Mammary epithelial cell (primary cell): ENCODE measurements at regions of chr2 and their contacts with region 1.

Region 1: DNA sequence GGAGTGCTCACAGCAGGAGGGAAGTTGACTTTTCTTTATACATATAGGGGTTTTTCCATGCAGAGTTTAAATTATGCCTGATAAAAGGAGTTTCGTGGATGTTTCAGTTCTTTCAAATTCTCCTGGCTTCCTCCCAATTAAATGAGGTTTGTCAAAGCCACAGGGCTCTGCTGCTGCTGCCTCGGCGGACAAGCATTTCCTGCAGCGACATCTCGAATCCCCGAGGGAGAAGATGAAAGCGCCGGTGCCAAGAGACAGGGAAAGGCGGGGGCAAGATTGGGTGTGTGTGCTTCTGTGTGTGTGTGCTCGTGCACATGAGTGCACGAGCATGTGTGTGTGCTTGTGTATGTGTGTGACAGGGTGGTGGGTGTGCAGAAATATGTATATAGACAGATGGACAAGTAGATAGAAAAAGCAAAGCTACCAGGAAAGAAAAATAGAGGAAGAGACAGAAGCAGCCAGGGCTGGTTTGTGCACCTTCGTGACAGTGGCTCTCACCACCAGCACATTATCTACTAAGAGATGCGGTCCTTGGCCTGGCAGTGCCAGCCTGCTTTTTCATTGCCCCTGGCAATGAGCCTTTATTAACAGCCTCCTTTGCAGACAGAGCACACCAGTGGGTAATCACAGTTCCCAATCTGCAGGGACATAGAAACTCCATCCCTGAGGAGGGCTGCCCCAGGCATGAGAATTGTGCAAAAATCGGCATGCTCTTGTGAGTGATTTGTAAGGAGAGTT is 76.2 kb downstream of the CDK15 start:
- DNase-seq: peak; percentile 27
- H3K4me3 ChIP-seq: no peak overlapping the region
- H3K27ac ChIP-seq: no peak overlapping the region
- H3K4me1 ChIP-seq: peaks cover 11% of the 10 kb centered on the region
- H3K27me3 ChIP-seq: no peaks in the 10 kb centered on the region
- CTCF ChIP-seq: no peak

Region 2: DNA sequence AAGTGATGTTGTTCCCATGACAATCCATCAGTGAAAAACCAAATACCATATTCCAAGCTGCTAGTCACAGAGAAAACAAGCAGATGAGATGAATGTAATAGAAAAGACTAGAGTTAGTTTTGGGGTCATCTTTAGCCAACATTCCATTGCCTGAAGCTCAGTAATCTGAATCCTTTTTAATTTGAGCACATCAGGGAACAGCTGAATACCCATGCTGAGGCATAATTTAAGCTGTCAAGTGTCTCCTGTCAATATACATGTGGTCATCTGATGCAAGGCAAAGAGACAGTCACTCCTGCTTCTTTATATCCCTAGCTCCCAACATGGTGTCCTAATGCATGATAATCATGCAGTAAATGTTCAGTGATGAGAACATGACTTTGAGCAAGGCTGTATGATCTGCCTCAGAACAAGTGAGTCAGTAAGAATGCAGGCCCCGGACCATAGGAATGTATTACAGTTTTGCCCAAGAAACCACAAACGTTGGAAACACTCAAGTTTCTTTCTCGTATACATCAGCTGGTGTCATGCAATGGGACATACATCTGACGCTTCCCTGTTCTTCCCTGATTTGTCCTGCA is 28.2 kb before region 1 on chr2:
- CTCF ChIA-PET with region 1: interaction called, 11 read pairs
- dilution Hi-C with region 1: no loop called
- in situ Hi-C with region 1: no loop called
- intact Hi-C with region 1: no loop called
- DNase-seq: peak; percentile 98
- H3K4me3 ChIP-seq: peak overlapping the region; percentile 2 to 37 (median 10)
- H3K27ac ChIP-seq: peak overlapping the region; percentile 97
- H3K4me1 ChIP-seq: peaks cover 43% of the 10 kb centered on the region
- H3K27me3 ChIP-seq: no peaks in the 10 kb centered on the region
- CTCF ChIP-seq: no peak